Natural killer cell (primary cell): ENCODE measurements at regions of chrX and their contacts with region 1.

Region 1: DNA sequence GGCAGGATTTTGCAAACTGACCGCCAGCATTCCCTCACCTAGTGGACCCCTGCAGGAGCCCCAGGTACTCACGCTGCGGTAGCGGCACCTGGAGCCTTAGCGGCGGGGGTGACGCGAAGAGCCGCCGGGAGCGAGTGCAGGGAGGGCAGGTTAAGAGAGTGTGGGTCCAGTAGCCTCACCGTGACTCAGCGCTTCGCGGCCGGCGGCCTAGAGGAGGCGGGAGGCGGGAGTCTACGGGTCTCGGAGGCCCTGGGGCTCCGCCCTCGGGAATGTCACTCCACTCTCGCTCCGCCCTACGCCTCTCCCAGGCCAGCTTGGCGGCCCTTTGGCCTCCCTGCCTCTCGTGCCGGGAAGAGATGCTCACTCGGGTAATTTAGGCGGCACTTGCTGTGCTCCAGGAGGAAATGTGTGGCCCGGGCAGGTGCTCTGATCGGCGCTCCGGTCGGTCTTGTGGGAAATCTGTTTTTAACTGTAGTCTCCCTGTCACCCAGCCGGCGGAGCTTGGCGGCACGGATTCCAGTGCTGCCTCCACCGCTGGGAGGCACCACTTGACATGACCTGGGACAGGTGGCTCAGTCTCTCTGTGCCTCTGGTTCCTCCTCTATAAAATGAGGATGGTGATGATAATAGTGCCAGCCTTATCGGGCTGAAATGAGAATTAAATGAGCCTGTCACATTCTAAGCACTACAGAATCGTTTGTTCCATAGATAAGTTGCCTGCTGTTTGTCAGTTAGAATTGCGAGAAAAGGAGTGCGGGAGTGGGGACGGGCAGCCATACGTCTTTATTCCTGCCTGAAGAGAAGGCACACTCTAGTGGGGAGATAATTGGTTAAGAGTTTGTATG is at the start of gene PIR:
- DNase-seq: peak; percentile 34 to 47
- ATAC-seq: peak; percentile 91 to 97 (median 93)
- H3K4me3 ChIP-seq: peak within 1 kb of the TSS; percentile 43
- H3K4me3 Mint-ChIP-seq: peak within 1 kb of the TSS; percentile 83
- H3K27ac ChIP-seq: no peak within 1 kb of the TSS
- H3K27ac Mint-ChIP-seq: peak within 1 kb of the TSS; percentile 25 to 47
- H3K4me1 ChIP-seq: peaks cover 8% of the 10 kb centered on the region
- H3K4me1 Mint-ChIP-seq: peaks cover 13 to 18% of the 10 kb centered on the region in 2 donors
- H3K27me3 ChIP-seq: no peaks in the 10 kb centered on the region
- H3K27me3 Mint-ChIP-seq: peaks cover 5 to 44% of the 10 kb centered on the region in 2 donors
- CTCF ChIP-seq: no peak
- total RNA-seq, gene PIR: 0.57 TPM in 1 of 3 donors, not detected in the others

Region 2: DNA sequence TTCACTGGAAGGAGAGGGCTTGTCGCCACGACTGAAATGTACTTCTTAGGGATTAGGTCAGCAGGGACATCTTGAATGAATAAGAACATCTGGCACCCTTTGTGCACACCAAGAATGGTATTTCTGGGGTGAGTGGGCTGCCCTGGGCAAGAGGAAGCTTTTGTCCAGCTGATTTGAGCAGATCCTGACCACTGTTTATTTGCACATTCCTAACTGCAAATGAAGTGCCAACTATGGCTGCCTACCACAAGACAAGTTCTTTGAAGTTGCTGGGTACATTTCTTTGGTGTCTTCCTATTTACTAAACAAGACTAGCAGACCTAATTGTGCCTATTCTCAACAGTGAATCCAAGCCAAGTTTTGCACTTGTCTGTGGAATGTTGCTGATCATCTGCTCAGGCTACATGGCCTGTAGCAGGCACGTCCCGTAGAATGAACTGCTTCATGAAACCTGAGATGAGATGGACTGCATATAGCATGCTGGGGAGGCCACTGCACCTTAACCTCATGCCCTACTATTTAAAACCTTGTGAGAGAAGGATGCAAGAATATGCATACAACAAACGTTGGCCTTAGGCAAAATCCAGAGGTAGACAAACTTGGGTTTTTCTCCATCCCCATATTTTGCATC is 45.2 kb before region 1 on chrX:
- intact Hi-C with region 1: no loop called
- DNase-seq: no peak
- ATAC-seq: no peak
- H3K4me3 ChIP-seq: no peak overlapping the region
- H3K4me3 Mint-ChIP-seq: no peak overlapping the region
- H3K27ac ChIP-seq: no peak overlapping the region
- H3K27ac Mint-ChIP-seq: no peak overlapping the region
- H3K4me1 ChIP-seq: no peaks in the 10 kb centered on the region
- H3K4me1 Mint-ChIP-seq: no peaks in the 10 kb centered on the region
- H3K27me3 ChIP-seq: no peaks in the 10 kb centered on the region
- H3K27me3 Mint-ChIP-seq: peaks cover 4 to 34% of the 10 kb centered on the region in 2 donors
- CTCF ChIP-seq: no peak

Region 3: GRCh38 chrX:15530318-15530717 is 37.0 kb after region 1 on chrX:
- intact Hi-C with region 1: no loop called
- DNase-seq: no peak
- ATAC-seq: no peak
- H3K4me3 ChIP-seq: no peak overlapping the region
- H3K4me3 Mint-ChIP-seq: no peak overlapping the region
- H3K27ac ChIP-seq: no peak overlapping the region
- H3K27ac Mint-ChIP-seq: no peak overlapping the region
- H3K4me1 ChIP-seq: no peaks in the 10 kb centered on the region
- H3K4me1 Mint-ChIP-seq: no peaks in the 10 kb centered on the region
- H3K27me3 ChIP-seq: no peaks in the 10 kb centered on the region
- H3K27me3 Mint-ChIP-seq: peaks cover 0 to 47% of the 10 kb centered on the region in 2 donors
- CTCF ChIP-seq: no peak

Region 4: DNA sequence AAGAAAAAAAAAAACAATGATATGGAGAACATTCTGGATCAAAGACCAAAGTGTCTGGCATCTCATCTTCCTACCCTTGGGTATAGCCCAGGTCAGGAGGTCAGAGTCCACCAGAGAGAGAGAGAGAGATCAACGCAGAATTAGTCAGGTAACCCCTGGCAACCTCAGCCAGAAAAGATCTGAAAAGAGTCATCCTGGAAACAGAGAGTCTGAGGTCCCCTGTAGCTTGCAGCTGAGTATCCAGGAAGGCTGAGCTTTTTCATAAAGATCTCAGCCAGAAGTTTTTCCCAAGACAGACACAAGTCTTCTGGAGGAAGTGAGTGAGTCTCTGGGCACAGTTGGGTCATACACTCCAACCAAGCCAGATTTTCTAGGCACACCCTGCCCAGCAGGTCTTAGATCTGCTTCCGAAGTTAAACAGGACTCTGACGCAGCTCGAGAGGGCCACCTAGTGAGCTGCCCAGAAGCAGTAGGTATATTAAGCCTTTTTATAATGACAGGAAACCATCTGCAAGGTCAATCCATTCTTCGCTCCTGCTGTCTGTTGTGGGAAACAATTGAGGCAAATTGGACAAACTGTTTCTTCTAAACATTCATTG is 71.7 kb after region 1 on chrX:
- intact Hi-C with region 1: loop called (anchors 2 kb)
- DNase-seq: peak; percentile 17 to 32
- ATAC-seq: peak; percentile 46 to 70 (median 53)
- H3K4me3 ChIP-seq: no peak overlapping the region
- H3K4me3 Mint-ChIP-seq: no peak overlapping the region
- H3K27ac ChIP-seq: no peak overlapping the region
- H3K27ac Mint-ChIP-seq: no peak overlapping the region
- H3K4me1 ChIP-seq: no peaks in the 10 kb centered on the region
- H3K4me1 Mint-ChIP-seq: no peaks in the 10 kb centered on the region
- H3K27me3 ChIP-seq: no peaks in the 10 kb centered on the region
- H3K27me3 Mint-ChIP-seq: peaks cover 0 to 35% of the 10 kb centered on the region in 2 donors
- CTCF ChIP-seq: no peak

Region 5: DNA sequence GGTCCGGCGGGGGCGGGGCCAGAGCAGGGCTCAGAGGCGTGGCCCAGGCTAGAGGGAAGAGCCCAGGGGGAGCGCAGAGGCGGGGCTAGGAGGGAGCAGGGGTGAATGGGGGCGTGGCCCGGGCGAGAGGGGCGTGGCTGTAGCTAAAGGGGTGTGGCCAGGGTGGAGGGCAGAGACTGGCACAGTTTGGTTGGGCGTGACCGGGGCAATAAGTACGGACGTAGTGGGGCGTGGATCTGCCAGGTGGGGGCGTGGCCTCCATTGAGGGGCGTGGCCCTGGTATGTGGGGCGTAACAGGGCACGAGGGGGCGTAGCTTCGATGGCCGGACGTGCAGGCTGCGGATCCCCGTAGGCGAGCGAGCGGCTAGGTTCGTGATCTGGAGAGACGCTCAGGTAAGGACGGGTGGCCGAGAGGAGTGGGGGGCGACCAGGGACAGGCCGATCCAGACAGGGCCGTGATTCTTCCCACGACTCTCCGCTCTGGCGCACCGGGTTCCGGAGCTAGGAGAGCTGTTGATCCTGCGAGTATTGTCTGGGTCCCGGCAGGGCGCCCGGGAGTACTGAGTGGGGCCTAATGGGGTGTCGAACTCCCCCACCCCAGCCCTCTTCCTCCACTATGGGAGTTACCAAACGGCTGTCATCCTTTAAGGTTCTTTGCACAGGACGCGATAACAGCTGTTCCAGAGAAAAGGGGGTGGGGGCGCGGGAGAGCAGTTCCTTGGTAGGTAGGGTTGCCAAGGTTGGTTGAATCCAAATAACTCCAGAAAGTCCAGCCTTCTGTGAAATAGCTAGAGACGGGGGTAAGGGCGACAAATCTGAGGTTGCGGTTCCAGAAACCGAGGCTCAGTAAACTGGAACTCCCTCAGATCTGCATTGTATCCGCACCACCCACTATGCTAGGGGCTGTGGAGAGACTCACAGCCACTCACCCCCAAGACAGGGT is 244.9 kb after region 1 on chrX and contains the start of gene CA5B:
- intact Hi-C with region 1: no loop called
- DNase-seq: peak; percentile 96 to 97
- ATAC-seq: peak; percentile 92 to 99 (median 92)
- H3K4me3 ChIP-seq: peak within 1 kb of the TSS; percentile 69
- H3K4me3 Mint-ChIP-seq: peak within 1 kb of the TSS; percentile 95
- H3K27ac ChIP-seq: peak within 1 kb of the TSS; percentile 85
- H3K27ac Mint-ChIP-seq: peak within 1 kb of the TSS; percentile 87 to 93
- H3K4me1 ChIP-seq: peaks cover 20% of the 10 kb centered on the region
- H3K4me1 Mint-ChIP-seq: peaks cover 54 to 57% of the 10 kb centered on the region in 2 donors
- H3K27me3 ChIP-seq: no peaks in the 10 kb centered on the region
- H3K27me3 Mint-ChIP-seq: no peaks in the 10 kb centered on the region
- CTCF ChIP-seq: no peak
- total RNA-seq, gene CA5B: 56.3 to 111 (median 80.5) TPM

Region 6: DNA sequence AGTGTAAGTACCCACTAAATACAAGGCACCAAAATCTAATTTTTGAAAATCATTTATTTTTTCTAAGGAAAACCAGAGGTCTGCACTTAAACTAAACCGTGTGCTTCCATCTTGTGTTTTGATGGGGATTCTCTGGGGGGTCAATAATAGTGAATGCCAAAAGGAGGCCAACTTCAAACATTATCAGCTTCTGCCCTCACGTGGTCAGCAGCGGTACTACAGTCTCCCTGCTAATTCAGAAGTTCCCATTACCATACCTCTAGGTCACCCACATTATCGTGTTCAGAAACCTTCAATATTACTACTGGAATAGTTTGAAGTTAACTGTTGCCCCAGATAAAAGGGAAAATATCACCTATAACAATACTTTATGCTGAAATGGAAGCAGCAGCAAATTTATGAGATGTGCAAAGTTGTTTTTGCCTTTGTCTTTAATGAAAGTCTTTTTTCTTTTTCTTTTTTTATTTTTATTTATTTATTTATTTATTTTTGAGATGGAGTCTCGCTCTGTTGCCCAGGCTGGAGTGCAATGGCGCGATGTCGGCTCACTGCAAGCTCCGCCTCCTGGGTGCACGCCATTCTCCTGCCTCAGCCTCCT is 1201.8 kb after region 1 on chrX:
- intact Hi-C with region 1: loop called (anchors 10 kb)
- DNase-seq: peak; percentile 44 to 72
- ATAC-seq: peak; percentile 73 to 97 (median 85)
- H3K4me3 ChIP-seq: no peak overlapping the region
- H3K4me3 Mint-ChIP-seq: no peak overlapping the region
- H3K27ac ChIP-seq: no peak overlapping the region
- H3K27ac Mint-ChIP-seq: no peak overlapping the region
- H3K4me1 ChIP-seq: no peaks in the 10 kb centered on the region
- H3K4me1 Mint-ChIP-seq: no peaks in the 10 kb centered on the region
- H3K27me3 ChIP-seq: no peaks in the 10 kb centered on the region
- H3K27me3 Mint-ChIP-seq: no peaks in the 10 kb centered on the region
- CTCF ChIP-seq: peak; percentile 69